ENCODE measurements at regions of chr15 and their contacts with region 1.

Region 1: GRCh38 chr15:98292442-98293240 is 332.1 kb downstream of the ARRDC4 start:
- DNase-seq: peak; percentile 73
- CTCF ChIP-seq: peak; percentile 73

Region 2: DNA sequence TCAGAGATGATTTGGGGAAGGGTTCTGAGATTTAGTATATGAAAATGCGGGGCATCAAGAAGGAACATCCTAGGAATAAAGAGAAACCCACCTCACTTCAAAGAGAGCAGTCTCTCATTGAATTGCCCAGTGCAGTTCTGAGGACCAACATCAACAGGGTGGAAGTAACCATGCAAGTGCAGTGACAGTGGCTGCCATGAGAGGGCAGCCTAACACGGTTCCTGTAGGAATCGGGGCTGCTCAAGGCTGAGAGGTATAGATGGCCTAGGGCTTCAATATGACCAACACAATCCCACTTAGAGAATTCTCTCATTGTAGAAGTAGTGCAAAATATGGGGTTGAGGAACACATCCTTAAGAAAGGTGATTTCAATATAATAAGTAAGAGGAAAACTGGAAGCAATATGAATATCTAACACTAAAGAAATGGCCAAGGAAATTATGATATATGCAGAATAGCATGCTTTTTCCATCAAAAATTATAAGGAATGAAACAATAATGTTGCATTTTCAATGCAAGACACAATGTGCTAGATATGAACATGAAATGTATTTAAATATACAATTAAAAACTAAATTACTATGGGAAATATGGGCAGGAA is 383.2 kb before region 1 on chr15:
- in situ Hi-C with region 1: loop called (anchors 10 kb)
- DNase-seq: peak; percentile 60
- CTCF ChIP-seq: peak; percentile 86